GM13976 (cell line): ENCODE measurements at regions of chr12 and their contacts with region 1.

Region 1: DNA sequence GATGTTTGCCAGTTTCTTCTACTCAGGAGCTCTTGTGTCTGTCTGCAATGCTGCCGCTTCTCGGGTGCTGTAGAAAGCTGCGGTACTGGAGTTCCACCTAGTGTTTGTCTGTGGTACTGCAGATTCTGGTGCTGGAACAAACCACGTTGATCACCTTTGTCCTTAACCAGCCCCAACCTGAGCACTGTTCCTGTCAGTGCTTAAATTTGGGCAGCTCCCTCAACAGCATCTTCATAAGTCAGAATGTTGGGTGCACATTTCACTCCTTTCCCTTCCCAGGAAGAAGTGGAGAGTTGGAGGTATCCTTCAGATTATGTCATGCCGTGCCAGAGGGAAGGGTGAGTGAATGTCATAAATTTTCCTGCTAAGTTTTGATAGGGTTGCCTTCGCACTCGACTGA is 48.7 kb upstream of the LALBA start:
- DNase-seq: peak; percentile 73
- CTCF ChIP-seq: peak; percentile 87

Region 2: DNA sequence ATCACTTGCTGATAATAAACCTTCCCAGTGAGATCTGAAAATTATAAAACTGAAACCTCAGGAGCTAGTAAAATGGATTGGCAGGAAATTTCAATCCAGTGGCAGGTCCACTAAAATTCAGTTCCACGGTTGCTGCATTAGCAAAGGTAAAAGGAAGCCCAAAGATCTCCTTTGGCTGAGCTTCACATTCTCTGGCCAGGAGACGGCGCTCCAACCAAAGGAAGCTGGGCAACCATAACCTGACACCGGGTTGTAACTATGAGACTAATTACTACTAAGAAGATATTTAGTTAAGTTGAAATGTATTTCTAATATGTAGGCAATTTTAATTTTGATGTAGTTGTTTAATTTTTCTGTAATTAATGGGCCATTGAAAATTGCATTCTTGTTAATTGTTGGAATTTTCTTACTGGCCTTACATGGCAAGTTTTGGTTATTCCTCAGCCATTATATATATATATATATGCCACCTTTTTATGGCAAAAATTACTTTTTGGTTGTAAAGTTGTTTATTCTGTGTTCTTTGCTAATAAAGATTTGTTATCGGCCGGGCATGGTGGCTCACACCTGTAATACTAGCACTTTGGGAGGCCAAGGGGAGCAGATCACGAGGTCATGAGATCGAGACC is 76.1 kb before region 1 on chr12:
- in situ Hi-C with region 1: loop called (anchors 5 kb)
- DNase-seq: peak; percentile 42
- CTCF ChIP-seq: peak; percentile 65

Region 3: DNA sequence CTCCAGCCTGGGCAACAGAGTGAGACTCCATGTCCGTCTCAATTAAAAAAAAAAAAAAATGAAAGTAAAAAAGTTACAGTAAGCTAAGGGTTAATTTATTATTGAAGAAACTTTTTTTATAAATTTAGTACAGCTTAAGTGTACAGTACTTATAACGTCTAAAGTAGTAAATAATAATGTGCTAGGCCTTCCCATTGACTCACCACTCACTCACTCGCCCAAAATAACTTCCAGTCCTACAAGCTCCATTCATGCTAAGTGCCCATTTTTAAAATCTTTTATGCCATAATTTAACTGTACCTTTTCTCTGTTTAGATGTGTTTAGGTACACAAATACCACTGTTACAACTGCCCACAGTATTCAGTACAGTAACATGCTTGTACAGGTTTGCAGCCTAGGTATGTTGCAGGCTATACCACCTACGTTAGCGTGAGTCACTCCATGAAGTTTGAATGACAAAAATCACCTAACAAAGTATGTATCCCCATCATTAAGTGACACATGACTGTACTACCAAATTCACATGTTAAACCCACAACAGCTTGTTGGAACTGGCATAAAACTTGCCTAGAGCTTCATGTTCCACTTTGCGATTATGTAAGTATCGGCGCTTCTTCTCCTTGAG is 52.8 kb after region 1 on chr12:
- in situ Hi-C with region 1: no loop called
- DNase-seq: no peak
- CTCF ChIP-seq: no peak